HCT116 (cell line): ENCODE measurements at regions of chr20 and their contacts with region 1.

Region 1: DNA sequence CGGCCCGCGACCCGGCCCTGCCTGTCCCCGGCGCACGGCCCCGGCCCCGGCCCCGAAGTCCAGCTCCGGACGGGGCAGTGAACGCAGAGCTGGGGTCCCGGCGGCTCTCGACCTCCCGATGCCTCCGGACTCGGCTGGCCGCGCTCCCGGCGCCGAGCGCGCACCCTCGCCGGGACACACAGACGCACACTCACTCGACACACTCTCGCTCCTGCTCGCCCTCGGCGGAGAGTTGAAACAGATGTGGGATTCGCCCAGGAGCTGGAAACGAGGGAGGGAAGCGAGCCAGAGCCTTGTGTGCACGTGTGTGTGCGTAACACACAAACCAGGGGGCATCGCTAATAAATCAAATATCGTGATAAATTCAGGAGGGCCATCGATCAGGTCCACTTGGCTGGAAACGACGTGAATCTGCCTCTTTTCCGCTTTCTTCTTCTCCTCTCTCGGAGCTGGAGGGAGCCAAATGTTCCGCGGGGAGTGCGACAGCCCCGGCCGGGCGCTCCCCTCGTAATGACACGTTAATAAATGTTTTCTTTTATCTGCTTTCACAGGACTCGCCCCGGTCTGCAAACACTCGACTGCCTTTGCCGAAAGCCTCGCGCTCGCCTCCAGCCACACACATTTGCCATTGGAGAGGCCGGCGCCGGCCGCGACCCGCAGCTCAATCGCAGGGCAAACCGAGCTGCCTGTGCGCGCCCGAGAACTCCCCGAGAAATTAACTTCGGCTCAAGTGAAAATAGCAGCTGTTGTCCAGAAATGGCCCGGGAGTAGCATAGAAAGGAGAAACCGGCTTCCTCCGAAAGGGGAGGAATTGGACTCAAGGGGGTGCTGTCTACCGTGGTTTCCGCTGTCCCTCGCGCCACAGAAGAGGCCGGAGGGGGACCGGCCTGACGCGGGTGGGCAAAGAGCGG is 828 bp upstream of the SULF2 start:
- DNase-seq: peak; percentile 64
- ATAC-seq: peak; percentile 83
- H3K4me3 ChIP-seq: peak overlapping the region; percentile 35 to 59
- H3K27ac ChIP-seq: no peak overlapping the region
- H3K4me1 ChIP-seq: peaks cover 11 to 22% of the 10 kb centered on the region in 2 experiments
- H3K27me3 ChIP-seq: no peaks in the 10 kb centered on the region
- CTCF ChIP-seq: peak; percentile 78 to 83 (median 80)
- POLR2A ChIP-seq: no peak
- RAD21 ChIP-seq: peak; percentile 94

Region 2: DNA sequence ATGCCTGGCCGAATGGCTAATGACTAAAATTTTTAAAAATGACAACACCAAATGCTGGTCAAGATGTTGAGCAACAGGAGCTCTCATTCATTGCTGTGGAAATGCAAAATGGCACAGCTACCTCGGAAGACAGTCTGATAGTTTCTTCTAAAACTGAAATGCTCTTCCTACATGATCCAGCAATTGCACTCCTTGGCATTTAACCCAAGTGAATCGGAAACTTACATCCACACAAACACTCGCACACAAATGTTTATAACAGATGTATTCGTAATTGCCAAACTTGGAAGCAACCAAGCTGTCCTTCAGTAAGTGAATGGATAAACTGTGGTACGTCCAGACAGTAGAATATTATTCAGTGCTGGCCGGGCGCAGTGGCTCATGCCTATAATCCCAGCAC is 340.8 kb before region 1 on chr20:
- CTCF ChIA-PET with region 1: no interaction called
- POLR2A ChIA-PET with region 1: no interaction called
- RAD21 ChIA-PET with region 1: no interaction called
- intact Hi-C with region 1: no loop called
- DNase-seq: no peak
- ATAC-seq: no peak
- H3K4me3 ChIP-seq: no peak overlapping the region
- H3K27ac ChIP-seq: no peak overlapping the region
- H3K4me1 ChIP-seq: peaks cover 8 to 11% of the 10 kb centered on the region in 2 experiments
- H3K27me3 ChIP-seq: no peaks in the 10 kb centered on the region
- CTCF ChIP-seq: no peak
- POLR2A ChIP-seq: no peak
- RAD21 ChIP-seq: no peak

Region 3: GRCh38 chr20:47677635-47678453 is 108.3 kb before region 1 on chr20:
- CTCF ChIA-PET with region 1: no interaction called
- POLR2A ChIA-PET with region 1: no interaction called
- RAD21 ChIA-PET with region 1: no interaction called
- intact Hi-C with region 1: loop called (anchors 5 kb)
- DNase-seq: peak; percentile 51
- ATAC-seq: peak; percentile 92
- H3K4me3 ChIP-seq: no peak overlapping the region
- H3K27ac ChIP-seq: no peak overlapping the region
- H3K4me1 ChIP-seq: peaks cover 0 to 8% of the 10 kb centered on the region in 2 experiments; a peak in 1 of 4 replicates
- H3K27me3 ChIP-seq: no peaks in the 10 kb centered on the region
- CTCF ChIP-seq: peak; percentile 59 to 88 (median 87)
- POLR2A ChIP-seq: no peak
- RAD21 ChIP-seq: peak; percentile 87

Region 4: DNA sequence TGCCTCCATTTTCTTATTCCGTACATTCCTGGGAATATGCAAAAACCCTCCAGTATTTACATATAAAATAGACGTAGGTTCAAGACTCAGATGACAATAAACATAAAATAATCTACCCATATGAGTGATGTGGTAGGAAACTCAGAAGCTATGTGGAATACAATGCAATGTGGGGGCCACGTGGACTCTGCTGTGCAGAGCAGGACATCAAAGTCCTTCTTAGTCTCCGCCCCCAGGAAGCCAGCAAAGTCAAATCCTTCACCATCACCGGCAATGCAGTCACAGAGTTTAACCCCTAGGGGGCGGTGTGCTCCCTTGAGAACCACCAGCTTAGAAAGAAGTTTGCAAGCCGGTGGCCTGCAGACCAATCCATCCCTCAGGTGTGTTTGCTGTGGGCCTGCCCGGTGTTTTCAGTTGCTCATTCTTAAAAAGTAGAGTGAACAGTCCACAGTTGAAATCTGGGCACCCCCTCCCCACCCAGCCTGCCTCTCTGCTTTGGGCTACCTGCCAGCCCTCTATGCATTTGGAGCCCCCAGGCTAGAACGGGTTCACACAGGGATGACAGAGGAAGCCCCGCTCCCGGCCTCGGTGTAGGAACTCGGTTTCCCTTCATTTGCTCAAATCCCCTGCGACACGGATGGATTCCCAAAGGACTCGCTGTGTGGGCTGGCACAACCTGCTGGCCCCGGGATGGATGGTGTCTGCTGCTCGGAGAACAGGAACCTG is 60.7 kb before region 1 on chr20:
- CTCF ChIA-PET with region 1: interaction called, 10 read pairs
- POLR2A ChIA-PET with region 1: no interaction called
- RAD21 ChIA-PET with region 1: no interaction called
- intact Hi-C with region 1: no loop called
- DNase-seq: peak; percentile 82
- ATAC-seq: peak; percentile 95
- H3K4me3 ChIP-seq: no peak overlapping the region
- H3K27ac ChIP-seq: no peak overlapping the region
- H3K4me1 ChIP-seq: peaks cover 0 to 10% of the 10 kb centered on the region in 2 experiments; a peak in 2 of 4 replicates
- H3K27me3 ChIP-seq: no peaks in the 10 kb centered on the region
- CTCF ChIP-seq: peak; percentile 62 to 96 (median 96)
- POLR2A ChIP-seq: no peak
- RAD21 ChIP-seq: peak; percentile 82

Region 5: DNA sequence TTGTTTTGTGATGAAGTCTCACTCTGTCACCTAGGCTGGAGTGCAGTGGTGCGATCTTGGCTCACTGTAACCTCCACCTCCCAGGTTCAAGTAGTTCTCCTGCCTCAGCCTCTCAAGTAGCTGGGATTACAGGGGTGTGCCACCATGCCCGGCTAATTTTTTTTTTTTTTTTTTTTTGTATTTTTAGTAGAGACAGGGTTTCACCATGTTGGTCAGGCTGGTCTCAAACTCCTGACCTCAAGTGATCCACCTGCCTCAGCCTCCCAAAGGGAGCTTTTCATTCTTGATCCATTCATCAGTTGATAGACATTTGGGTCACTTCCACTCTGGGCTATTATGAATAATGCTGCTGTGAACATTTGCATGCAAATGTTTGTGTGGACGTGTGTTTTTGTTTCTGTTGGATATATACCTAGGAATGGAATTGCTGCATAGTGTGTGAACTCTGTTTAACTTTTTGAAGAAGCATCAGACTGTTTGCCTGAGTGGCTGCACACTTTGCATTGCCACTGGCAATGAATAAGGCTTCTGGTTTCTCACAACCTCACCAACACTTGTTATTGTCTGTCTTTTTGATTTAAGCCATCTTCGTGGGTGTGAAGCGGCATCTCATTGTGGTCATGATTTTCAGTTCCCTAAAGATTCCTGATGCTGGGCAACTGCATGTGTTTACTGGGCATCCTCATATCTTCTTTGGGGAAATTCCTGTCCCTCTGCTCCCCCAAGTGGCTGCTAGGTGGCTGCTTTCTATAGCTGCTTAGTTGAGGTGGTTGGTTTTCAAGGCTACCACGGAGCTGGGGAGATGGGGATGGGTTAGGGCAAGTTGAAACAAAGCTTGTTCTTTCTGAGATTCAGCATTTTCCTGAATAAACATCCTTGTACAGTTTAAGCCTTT is 402.8 kb after region 1 on chr20:
- CTCF ChIA-PET with region 1: interaction called, 9 read pairs
- POLR2A ChIA-PET with region 1: no interaction called
- RAD21 ChIA-PET with region 1: no interaction called
- intact Hi-C with region 1: loop called (anchors 2 kb)
- DNase-seq: peak; percentile 12
- ATAC-seq: peak; percentile 76
- H3K4me3 ChIP-seq: no peak overlapping the region
- H3K27ac ChIP-seq: no peak overlapping the region
- H3K4me1 ChIP-seq: no peaks in the 10 kb centered on the region
- H3K27me3 ChIP-seq: no peaks in the 10 kb centered on the region
- CTCF ChIP-seq: peak; percentile 45 to 54 (median 51); a peak in 5 of 6 replicates
- POLR2A ChIP-seq: no peak
- RAD21 ChIP-seq: peak; percentile 68

Region 6: DNA sequence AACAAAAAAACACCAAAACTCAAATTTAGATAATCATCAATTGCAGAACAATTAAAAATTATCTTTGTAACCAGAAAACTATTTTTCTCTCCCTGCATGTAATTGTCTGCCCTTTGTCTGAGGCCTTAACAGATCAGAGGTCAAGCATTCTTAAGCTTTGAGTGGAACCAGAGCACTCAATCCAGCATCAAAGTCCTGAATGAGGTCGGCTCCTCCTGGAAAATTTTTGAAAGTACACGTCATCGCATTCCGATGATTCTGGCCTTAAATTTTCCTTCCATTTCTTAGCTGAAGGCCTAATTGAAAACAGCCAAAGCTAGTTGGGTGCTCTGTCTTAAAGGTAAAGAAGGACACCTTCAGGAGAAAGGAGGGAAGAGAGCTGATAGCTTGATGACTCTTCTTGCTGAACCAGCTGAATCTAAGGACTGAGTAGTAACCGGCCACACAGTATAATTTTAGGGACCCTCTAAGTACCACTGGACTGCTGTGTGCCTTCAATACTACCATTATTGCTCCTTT is 509.4 kb after region 1 on chr20:
- CTCF ChIA-PET with region 1: interaction called, 30 read pairs
- POLR2A ChIA-PET with region 1: interaction called, 4 read pairs
- RAD21 ChIA-PET with region 1: interaction called in 1 of 2 experiments, 3 read pairs
- intact Hi-C with region 1: loop called (anchors 2 kb)
- DNase-seq: peak; percentile 79
- ATAC-seq: peak; percentile 92
- H3K4me3 ChIP-seq: no peak overlapping the region
- H3K27ac ChIP-seq: peak overlapping the region; percentile 19; the same call in 1 of the 2 replicates
- H3K4me1 ChIP-seq: peaks cover 20 to 46% of the 10 kb centered on the region in 2 experiments
- H3K27me3 ChIP-seq: 0 out of 2 replicates have a peak, but pooled peaks cover 5% of the 10 kb centered on the region
- CTCF ChIP-seq: peak; percentile 43 to 52 (median 51); a peak in 4 of 6 replicates
- POLR2A ChIP-seq: no peak
- RAD21 ChIP-seq: peak; percentile 85